Tibial artery (tissue), 4 donors: ENCODE measurements at regions of chrX and their contacts with region 1.

Region 1: DNA sequence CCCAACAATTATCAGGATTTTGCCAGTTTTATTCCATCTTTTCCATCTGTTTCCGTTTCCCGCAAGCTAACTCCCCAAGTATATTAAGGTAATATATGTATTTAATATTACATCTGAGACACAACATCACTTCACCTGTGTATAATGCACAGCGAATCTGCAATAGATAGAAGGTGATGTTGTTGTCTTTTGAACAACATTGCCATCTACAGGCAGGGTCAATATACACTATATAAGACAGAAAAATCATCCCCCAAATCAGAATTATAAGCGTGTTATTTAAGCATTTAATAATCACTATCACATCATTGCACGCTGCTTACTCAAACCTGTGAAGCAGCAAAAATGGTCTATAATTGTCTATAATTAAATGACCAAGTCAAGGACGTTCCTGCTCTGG is 1115.5 kb downstream of the NLGN4X start:
- DNase-seq: no peak
- H3K4me3 ChIP-seq: no peak overlapping the region
- H3K27ac ChIP-seq: no peak overlapping the region
- H3K4me1 ChIP-seq: no peaks in the 10 kb centered on the region
- H3K27me3 ChIP-seq: no peaks in the 10 kb centered on the region
- CTCF ChIP-seq: peak; percentile 36 to 42

Region 2: DNA sequence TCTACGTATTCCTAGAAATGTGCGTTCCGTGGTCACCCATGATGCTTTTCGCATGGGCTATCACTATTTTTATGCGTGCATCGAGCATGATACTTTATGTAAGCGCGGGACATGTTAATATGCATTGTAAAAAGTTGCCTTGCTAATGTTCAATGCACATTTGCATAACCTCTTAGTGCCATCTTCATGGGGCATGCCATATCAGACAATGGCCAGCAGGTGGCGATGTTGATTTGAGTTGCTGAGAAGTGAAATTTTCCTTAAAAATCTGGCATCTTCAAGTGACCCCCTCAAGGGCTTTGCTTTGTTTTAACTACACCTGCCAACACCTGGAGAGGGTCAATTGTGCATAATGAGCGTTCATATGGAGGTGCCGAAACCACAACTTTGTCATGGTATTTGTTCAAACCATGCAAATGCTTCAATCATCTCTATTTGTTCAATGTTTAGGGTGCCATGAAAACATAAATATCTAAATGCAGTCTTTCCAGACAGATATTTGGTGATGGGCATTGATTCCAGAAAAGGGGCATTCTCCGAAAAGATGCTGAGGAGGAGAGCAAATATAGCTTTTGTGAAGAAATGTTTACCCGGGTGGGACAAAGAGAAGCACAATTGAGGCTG is 565.8 kb before region 1 on chrX:
- intact Hi-C with region 1: loop called (anchors 5 kb)
- DNase-seq: no peak
- H3K4me3 ChIP-seq: no peak overlapping the region
- H3K27ac ChIP-seq: no peak overlapping the region
- H3K4me1 ChIP-seq: no peaks in the 10 kb centered on the region
- H3K27me3 ChIP-seq: no peaks in the 10 kb centered on the region
- CTCF ChIP-seq: peak; percentile 65 to 70

Region 3: DNA sequence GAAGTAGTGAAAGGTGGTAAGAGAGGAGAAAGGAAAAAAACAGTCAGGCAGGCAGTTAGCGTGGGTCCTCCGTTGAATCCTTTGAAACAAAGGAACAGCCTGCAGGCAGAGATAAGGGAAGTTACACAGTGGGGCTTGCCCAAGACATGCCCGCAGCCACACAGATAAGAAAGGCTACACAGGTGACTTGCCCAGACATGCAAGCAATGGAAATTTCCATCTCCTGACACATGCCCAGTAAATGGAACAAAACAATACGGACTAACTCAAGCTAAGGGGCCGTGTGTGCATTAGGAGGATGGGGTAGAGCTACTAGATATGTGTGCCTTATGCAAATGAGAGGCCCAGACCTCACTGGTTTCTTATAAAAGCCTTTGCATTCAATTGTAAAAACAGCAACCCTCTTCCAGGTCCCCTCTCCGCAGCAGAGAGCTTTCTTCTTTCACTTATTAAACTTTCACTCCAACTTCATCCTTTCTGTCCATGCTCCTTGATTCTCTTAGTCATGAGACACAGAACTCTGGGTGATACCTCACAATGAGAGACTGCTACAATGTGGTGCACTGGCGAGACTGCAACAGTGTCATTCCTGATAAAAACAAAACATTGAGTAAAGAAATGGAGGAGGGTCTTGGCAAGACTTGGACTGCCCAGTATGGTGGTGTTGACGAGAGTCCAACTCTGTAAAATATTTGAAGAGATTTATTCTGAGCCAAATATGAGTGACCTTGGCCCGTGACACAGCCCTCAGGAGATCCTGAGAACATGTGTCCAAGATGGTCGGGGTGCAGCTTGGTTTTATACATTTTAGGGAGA is 402.3 kb before region 1 on chrX:
- intact Hi-C with region 1: no loop called
- DNase-seq: no peak
- H3K4me3 ChIP-seq: no peak overlapping the region
- H3K27ac ChIP-seq: no peak overlapping the region
- H3K4me1 ChIP-seq: no peaks in the 10 kb centered on the region
- H3K27me3 ChIP-seq: no peaks in the 10 kb centered on the region
- CTCF ChIP-seq: no peak

Region 4: DNA sequence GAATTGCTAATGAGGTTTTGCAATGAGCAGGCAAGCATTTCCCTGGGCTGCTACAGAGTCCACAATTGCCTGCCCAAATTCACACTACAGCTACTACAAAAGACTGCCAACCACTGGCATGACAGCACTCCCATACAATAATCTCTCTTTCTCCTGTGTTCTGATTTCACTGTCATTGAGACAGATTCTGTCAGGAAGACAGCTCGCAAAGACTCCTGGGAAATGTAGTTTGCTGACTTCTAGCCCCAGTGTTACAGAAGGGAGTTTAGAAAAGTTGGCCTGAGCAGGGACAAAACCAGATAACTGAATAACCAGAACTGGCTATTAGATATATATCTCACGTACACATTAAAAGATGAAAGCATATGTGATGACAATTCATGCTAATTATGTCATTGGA is 168.4 kb before region 1 on chrX:
- intact Hi-C with region 1: no loop called
- DNase-seq: no peak
- H3K4me3 ChIP-seq: no peak overlapping the region
- H3K27ac ChIP-seq: no peak overlapping the region
- H3K4me1 ChIP-seq: no peaks in the 10 kb centered on the region
- H3K27me3 ChIP-seq: no peaks in the 10 kb centered on the region
- CTCF ChIP-seq: no peak

Region 5: DNA sequence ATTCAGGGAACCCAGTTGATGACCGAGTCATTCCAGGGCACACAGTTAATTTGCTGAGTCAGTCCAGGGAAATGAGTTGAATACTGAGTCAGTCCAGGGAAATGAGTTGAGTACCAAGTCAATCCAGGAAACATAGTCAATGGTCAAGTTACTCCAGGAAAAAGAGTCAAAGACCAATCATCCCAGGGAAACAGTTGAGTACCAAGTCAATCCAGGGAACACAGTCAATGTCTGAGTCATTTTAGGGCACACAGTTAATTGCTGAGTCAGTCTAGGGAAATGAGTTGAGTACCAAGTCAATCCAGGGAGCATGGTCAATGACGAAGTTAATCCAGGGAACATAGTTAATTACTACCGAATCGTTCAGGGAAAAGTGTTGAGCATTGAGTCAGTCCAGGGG is 361.2 kb after region 1 on chrX:
- intact Hi-C with region 1: no loop called
- DNase-seq: no peak
- H3K4me3 ChIP-seq: no peak overlapping the region
- H3K27ac ChIP-seq: no peak overlapping the region
- H3K4me1 ChIP-seq: no peaks in the 10 kb centered on the region
- H3K27me3 ChIP-seq: no peaks in the 10 kb centered on the region
- CTCF ChIP-seq: no peak

Region 6: DNA sequence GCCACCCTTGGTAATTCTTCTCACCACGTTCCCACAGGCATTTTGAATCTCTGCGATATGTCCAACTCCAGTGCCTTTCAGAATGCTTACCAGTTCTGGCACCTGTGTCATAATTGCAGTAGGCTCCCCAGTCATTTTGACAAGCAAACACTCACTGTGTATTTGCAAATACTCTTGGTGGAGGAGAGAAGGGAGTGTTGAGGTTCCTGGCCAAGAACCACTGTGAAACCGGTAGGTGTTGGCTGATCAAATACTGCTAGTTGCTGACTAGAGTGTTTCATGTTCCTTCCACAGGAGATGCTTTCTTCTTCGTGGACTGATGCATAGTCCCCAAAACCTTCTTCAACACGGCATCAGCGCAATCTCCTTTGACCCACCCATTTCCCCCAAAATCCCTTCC is 1131.5 kb after region 1 on chrX:
- intact Hi-C with region 1: no loop called
- DNase-seq: no peak
- H3K4me3 ChIP-seq: no peak overlapping the region
- H3K27ac ChIP-seq: no peak overlapping the region
- H3K4me1 ChIP-seq: no peaks in the 10 kb centered on the region
- H3K27me3 ChIP-seq: no peaks in the 10 kb centered on the region
- CTCF ChIP-seq: no peak

Region 7: DNA sequence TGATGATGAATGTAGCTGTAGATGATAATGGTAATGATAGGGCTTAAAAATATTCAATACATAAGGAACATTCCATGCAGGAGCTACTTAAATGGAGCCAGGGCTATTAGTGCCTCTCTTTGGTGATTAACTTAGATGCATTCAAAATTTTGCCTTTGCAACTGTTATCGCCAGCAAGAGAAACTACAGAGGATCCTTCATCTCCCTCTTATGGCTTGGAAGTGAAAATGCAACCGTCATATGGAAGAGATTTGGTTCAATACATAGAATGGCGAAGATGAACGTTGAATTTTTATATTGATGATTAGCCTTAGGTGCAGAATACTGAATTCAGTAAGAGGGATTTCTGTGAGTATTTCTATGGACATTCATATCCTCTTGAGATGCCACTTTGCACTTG is 1250.1 kb after region 1 on chrX:
- intact Hi-C with region 1: loop called (anchors 5 kb)
- DNase-seq: no peak
- H3K4me3 ChIP-seq: no peak overlapping the region
- H3K27ac ChIP-seq: no peak overlapping the region
- H3K4me1 ChIP-seq: no peaks in the 10 kb centered on the region
- H3K27me3 ChIP-seq: no peaks in the 10 kb centered on the region
- CTCF ChIP-seq: no peak